ENCODE measurements at regions of chr1 and their contacts with region 1.

Region 1: GRCh38 chr1:25080294-25081209 is 150.5 kb upstream of the RUNX3 start:
- DNase-seq: no peak
- H3K4me3 ChIP-seq: no peak overlapping the region
- CTCF ChIP-seq: no peak

Region 2: GRCh38 chr1:24878775-24879742 is 201.5 kb before region 1 on chr1:
- in situ Hi-C with region 1: no loop called
- DNase-seq: peak; percentile 19
- H3K4me3 ChIP-seq: no peak overlapping the region
- CTCF ChIP-seq: no peak

Region 3: GRCh38 chr1:25042331-25043227 is 38.0 kb before region 1 on chr1:
- in situ Hi-C with region 1: loop called (anchors 5 kb)
- DNase-seq: no peak
- H3K4me3 ChIP-seq: no peak overlapping the region
- CTCF ChIP-seq: no peak

Region 4: GRCh38 chr1:25343872-25344271 is 263.3 kb after region 1 on chr1:
- in situ Hi-C with region 1: no loop called
- DNase-seq: peak; percentile 75
- H3K4me3 ChIP-seq: no peak overlapping the region
- CTCF ChIP-seq: no peak

Measured in astrocyte of the cerebellum (primary cell).